Upper lobe of right lung (tissue), 1 donor: ENCODE measurements at regions of chr17 and their contacts with region 1.

Region 1: DNA sequence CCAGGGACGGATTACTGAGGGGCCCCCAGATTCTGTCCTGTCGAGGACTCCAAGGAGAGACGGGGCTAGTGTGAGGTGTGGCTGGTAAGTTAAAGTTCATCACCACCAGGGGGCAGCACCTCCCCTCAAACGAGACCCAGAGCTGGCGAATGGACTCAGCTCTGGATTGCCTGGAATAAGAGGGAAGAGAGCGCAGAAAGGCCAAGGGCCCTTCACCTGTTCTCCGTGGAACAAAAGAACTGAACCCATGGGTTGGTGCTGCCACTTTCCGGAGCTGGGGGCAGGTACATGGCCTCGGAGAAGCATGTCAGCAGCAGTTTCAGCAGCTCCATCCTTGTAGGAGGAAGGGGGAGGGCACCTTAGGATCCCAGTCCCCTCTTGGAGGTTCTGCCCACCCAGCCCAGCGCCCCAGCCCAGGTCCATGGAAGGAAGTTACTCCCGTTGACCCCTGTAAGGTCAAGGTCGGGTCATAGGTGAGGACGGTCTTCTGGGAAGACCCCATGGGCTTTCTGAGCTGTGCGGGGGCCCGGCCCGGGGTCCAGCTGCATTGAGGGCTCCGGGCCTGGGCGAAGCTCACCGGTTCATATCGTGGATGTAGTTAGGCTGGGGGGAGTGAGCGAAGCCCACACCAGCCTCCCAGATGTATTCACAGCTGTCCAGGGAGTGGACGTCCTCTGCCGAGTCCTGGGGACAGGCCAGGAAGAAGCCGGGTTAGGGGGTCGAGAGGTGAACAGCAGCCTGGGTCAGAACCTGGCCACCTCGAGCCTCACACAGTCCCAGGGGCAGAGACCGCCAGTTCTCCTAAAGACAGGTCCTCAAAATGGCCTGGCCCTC is 10.7 kb downstream of the HID1 start:
- DNase-seq: peak; percentile 89
- ATAC-seq: peak; percentile 85
- H3K4me3 ChIP-seq: no peak overlapping the region
- H3K27ac ChIP-seq: no peak overlapping the region
- H3K4me1 ChIP-seq: peaks cover 4% of the 10 kb centered on the region
- H3K27me3 ChIP-seq: no peaks in the 10 kb centered on the region
- CTCF ChIP-seq: peak; percentile 85

Region 2: DNA sequence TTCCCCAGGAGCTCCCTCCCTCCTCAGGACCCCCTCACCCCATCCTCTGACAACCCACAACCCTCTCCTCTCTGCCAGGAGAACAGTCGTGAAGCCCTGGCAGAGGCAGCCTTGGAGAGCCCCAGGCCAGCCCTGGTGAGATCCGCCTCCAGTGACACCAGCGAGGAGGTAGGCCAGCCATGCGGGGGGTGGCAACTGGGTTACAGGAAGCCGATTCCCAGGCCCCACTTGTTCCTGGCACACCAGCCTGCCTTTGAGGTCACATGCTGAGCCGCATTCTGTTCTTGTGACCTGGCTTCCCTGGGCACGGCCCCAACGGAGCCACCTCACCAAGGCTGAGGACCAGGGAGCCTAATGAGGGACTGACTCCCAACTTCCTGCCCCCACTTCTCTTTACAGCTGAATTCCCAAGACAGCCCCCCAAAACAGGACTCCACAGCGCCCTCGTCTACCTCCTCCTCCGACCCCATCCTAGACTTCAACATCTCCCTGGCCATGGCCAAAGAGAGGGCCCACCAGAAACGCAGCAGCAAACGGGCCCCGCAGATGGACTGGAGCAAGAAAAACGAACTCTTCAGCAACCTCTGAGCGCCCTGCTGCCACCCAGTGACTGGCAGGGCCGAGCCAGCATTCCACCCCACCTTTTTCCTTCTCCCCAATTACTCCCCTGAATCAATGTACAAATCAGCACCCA is 193.7 kb before region 1 on chr17:
- intact Hi-C with region 1: no loop called
- DNase-seq: peak; percentile 80
- ATAC-seq: peak; percentile 41
- H3K4me3 ChIP-seq: no peak overlapping the region
- H3K27ac ChIP-seq: no peak overlapping the region
- H3K4me1 ChIP-seq: no peaks in the 10 kb centered on the region
- H3K27me3 ChIP-seq: no peaks in the 10 kb centered on the region
- CTCF ChIP-seq: no peak

Region 3: GRCh38 chr17:75012346-75013091 is 50.6 kb after region 1 on chr17 and contains the start of gene MRPL58:
- intact Hi-C with region 1: loop called (anchors 10 kb)
- DNase-seq: peak; percentile 93
- ATAC-seq: peak; percentile 98
- H3K4me3 ChIP-seq: peak within 1 kb of the TSS; percentile 85
- H3K27ac ChIP-seq: peak within 1 kb of the TSS; percentile 90
- H3K4me1 ChIP-seq: peaks cover 16% of the 10 kb centered on the region
- H3K27me3 ChIP-seq: no peaks in the 10 kb centered on the region
- CTCF ChIP-seq: peak; percentile 62
- total RNA-seq, gene MRPL58: 21.6 TPM